SK-N-SH (cell line): ENCODE measurements at regions of chr14 and their contacts with region 1.

Region 1: DNA sequence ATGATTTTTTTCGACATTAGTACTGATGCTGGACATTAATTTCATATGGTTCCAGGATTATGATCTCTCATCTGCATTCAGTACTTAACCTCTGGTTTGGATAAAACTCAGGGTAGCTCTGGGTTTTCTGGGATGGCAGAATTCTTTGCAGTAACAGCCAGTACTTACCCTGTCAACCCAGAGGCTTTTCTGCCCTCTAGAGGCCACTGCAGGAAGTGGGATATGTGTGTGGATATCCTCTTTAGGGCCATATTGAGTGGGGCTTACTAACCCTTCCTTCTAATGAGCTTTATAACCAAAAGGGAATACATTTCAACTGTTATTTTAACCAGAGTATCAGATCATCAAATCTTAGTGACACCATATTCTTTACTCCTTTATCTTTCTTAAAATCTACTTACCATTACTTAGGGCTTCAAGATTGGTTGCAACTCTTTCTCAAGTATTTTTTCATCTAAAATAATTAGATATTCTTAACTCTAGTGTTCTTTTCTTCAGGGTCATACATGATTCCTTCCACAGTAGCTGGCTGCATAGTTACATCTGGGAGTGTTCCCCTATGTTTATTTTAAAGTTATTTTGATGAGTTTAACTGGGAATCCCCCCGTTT is 488.0 kb upstream of the STXBP6 start:
- DNase-seq: peak; percentile 26
- H3K4me3 ChIP-seq: no peak overlapping the region; a peak in 1 of 4 replicates
- H3K27ac ChIP-seq: no peak overlapping the region
- H3K4me1 ChIP-seq: no peaks in the 10 kb centered on the region
- H3K27me3 ChIP-seq: no peaks in the 10 kb centered on the region
- CTCF ChIP-seq: peak; percentile 68
- EP300 ChIP-seq: no peak
- RAD21 ChIP-seq: peak; percentile 64

Region 2: DNA sequence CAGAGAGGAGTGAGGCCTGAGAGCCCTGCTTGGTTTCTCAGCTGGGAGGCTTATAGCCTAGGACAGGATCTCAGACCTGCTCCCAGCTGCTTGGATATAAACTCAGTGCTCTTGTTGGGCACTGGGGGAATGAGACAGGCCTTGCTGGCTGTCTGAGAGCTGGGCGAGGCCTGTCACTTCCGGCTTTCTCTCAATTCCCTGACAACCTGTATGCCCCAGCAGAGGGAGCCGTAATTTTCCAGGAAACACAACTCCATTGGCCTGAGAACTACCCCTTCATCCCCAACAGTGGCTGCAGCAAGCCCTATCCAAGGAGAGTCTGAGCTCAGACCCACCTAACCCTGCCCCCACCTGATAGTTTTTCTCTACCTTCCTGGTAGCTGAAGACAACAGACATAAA is 229.7 kb before region 1 on chr14:
- CTCF ChIA-PET with region 1: no interaction called
- POLR2A ChIA-PET with region 1: no interaction called
- DNase-seq: no peak
- H3K4me3 ChIP-seq: no peak overlapping the region
- H3K27ac ChIP-seq: no peak overlapping the region
- H3K4me1 ChIP-seq: no peaks in the 10 kb centered on the region
- H3K27me3 ChIP-seq: no peaks in the 10 kb centered on the region
- CTCF ChIP-seq: no peak
- EP300 ChIP-seq: no peak
- RAD21 ChIP-seq: no peak

Region 3: DNA sequence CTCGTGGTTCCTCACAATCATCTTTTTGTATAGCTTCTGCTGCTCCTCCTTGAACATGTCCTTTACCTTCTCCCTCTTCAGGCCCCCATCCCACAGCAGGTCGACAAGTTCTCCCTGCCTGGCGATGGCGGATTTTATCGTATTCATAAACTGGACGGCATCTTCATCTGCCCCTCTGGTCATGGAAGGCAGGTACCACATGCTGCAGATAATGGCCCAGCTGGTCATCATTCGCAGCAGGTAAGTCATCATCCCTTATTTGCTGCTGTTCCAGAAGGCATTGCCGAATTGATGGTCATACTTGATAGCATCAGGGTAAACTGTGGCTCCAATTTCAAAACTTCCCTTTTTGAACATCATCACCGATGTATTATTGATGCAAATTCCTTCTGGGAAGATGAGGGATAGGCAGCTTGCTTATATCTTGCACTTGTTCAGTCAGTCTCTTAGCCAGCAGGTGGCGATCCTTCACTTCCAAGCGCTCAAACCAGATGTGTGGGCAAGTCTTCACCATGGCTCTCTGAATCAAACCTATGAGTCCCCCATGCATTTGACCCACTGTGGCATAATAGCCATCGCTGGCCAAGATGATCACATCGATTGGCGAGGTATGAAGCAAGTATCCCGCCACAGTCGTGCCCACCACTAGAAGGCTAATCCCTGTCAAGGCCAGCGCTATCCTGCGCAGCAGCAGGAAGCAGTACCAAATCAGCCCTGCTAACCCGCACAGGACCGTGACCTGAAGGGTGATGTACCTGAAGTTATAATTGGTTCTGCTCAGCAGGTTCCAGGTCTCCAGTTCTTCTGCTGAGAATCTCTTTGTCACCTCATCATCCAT is 106.5 kb before region 1 on chr14:
- CTCF ChIA-PET with region 1: interaction called, 22 read pairs
- POLR2A ChIA-PET with region 1: no interaction called
- DNase-seq: peak; percentile 15
- H3K4me3 ChIP-seq: no peak overlapping the region; a peak in 1 of 4 replicates
- H3K27ac ChIP-seq: no peak overlapping the region
- H3K4me1 ChIP-seq: no peaks in the 10 kb centered on the region
- H3K27me3 ChIP-seq: no peaks in the 10 kb centered on the region; the same call in 1 of the 2 replicates
- CTCF ChIP-seq: peak; percentile 48
- EP300 ChIP-seq: no peak
- RAD21 ChIP-seq: peak; percentile 45; the same call in 1 of the 2 replicates

Region 4: GRCh38 chr14:25551674-25552073 is 13.7 kb after region 1 on chr14:
- CTCF ChIA-PET with region 1: interaction called, 42 read pairs
- POLR2A ChIA-PET with region 1: no interaction called
- DNase-seq: no peak
- H3K4me3 ChIP-seq: no peak overlapping the region
- H3K27ac ChIP-seq: no peak overlapping the region
- H3K4me1 ChIP-seq: no peaks in the 10 kb centered on the region
- H3K27me3 ChIP-seq: no peaks in the 10 kb centered on the region
- CTCF ChIP-seq: no peak
- EP300 ChIP-seq: no peak
- RAD21 ChIP-seq: no peak

Region 5: GRCh38 chr14:25615174-25615573 is 77.2 kb after region 1 on chr14:
- CTCF ChIA-PET with region 1: no interaction called
- POLR2A ChIA-PET with region 1: no interaction called
- DNase-seq: no peak
- H3K4me3 ChIP-seq: no peak overlapping the region
- H3K27ac ChIP-seq: no peak overlapping the region
- H3K4me1 ChIP-seq: no peaks in the 10 kb centered on the region
- H3K27me3 ChIP-seq: no peaks in the 10 kb centered on the region
- CTCF ChIP-seq: no peak
- EP300 ChIP-seq: no peak
- RAD21 ChIP-seq: no peak

Region 6: DNA sequence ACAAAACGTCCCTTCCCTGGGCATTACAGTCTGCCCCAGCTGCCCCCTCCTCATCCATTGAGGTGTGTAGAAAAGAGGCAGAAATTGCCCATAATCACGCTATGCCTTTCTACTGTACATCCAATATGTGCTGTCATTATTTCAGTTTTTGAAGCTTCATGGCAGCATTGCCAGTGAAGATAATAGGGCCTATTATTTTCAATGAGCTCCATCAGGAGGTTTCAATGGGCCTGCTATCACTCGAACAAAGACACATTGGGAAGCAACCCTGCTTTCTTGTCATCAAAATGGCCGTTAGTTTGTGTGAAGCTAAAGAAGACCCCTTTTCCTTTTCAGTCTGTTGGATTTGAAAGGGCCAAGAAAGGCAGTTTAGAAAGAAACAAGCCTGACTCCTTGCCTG is 406.1 kb after region 1 on chr14:
- CTCF ChIA-PET with region 1: no interaction called
- POLR2A ChIA-PET with region 1: no interaction called
- DNase-seq: no peak
- H3K4me3 ChIP-seq: no peak overlapping the region
- H3K27ac ChIP-seq: no peak overlapping the region
- H3K4me1 ChIP-seq: no peaks in the 10 kb centered on the region
- H3K27me3 ChIP-seq: peaks cover 16% of the 10 kb centered on the region
- CTCF ChIP-seq: no peak
- EP300 ChIP-seq: no peak
- RAD21 ChIP-seq: no peak